Activated T-helper 1 cell treated with anti-CD3 and anti-CD28 coated beads, Interleukin-12 subunit alpha, Interleukin-12 subunit beta, Interleukin-2, Interleukin-4 antibody, amounts not matched to agents 30 ng/mL and 10 ng/mL and 1 ng/mL, durations not matched to agents 14 hours and 24 hours and 36 hours (primary cell): ENCODE measurements at regions of chr9 and their contacts with region 1.

Region 1: DNA sequence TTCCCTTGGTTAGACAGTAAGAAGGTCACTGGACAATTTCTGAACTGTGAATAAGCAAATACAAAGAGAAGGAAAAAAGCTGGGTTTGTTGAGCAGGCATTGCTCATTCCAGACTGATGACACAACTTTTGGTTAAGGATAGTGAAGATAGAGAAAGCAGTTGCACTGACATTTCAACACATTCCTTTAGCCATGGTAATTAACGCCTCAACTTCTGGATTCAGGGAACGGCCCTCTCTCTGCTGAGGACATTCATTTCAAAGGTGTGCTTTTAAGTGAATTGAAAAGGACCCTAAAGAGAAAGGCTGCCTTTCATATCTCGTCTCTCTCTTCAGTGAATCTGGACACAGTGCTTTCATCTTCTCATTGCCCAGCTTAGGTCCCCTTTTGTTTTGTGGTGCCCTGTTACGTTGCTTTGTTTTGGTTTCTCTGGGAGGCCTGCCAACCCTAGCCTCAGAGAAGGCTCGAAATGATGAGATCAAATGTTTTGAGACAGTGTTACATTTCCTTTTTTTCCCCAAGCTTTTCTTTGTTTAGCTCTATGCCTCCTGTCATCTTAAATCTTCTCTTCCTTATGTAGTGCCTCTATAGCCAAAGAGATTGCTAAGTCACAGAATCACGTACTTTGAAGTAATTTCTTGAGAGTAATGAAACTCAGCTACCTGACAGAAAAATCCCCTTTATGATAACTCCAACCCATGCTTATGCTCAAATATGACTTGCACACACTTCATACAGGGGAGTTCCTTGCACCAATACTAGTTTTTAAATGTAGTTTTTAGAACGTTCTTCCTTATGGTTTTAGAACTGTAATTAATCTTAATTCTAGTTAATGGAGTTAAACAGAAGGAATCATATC is 94.4 kb upstream of the IFNE start:
- DNase-seq: no peak
- H3K4me3 Mint-ChIP-seq: peak overlapping the region; percentile 4
- H3K27ac Mint-ChIP-seq: no peak overlapping the region
- H3K4me1 Mint-ChIP-seq: peaks cover 36% of the 10 kb centered on the region
- H3K27me3 Mint-ChIP-seq: peaks cover 33% of the 10 kb centered on the region

Region 2: DNA sequence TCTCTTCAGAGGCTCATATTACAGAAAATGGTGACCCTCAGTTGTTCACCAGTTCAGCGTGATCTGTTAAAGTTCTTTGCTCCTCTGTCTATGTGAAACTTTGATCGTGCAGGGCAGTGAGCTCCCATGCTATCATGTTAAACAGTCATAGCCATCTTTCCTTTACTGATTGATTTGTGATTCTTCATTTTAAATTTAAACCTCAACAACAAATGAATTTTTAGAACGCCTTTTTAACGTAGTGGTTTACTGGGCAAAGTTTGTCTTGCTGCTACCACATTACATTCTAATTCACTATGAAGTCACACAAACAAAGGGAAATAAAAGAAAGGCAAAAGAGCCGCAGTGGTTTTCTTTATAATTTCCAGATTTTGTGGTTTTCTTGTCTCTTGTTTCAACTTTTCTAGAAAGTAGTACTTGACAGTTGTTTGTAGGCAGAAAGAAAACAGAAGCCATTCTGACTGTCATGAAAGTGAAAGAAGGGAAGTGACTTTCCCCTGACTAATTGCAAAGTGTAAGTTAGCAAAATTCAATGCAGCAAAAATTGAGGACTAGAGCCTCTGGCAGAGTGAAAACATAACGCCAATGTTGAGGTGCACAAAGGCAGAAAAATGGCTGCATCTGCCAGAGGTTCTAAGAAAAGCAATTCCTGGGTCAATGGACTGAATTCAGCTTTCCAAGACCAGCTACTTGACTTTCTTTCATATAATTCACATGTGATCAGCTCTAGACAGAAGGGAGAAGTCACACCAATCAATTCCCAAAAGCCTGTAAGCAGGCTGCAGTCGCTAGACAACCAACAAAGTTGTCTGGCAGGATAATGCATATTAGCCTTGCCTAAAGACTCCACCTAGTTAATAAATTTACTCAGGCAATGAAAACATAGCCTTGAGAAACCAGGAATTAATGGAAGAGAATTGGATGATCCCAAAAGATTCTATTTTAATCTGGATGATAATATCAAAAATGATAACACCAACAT is 218.8 kb before region 1 on chr9:
- intact Hi-C with region 1: loop called (anchors 2 kb)
- DNase-seq: no peak
- H3K4me3 Mint-ChIP-seq: peak overlapping the region; percentile 56
- H3K27ac Mint-ChIP-seq: peak overlapping the region; percentile 68
- H3K4me1 Mint-ChIP-seq: peaks cover 14% of the 10 kb centered on the region
- H3K27me3 Mint-ChIP-seq: peaks cover 57% of the 10 kb centered on the region

Region 3: DNA sequence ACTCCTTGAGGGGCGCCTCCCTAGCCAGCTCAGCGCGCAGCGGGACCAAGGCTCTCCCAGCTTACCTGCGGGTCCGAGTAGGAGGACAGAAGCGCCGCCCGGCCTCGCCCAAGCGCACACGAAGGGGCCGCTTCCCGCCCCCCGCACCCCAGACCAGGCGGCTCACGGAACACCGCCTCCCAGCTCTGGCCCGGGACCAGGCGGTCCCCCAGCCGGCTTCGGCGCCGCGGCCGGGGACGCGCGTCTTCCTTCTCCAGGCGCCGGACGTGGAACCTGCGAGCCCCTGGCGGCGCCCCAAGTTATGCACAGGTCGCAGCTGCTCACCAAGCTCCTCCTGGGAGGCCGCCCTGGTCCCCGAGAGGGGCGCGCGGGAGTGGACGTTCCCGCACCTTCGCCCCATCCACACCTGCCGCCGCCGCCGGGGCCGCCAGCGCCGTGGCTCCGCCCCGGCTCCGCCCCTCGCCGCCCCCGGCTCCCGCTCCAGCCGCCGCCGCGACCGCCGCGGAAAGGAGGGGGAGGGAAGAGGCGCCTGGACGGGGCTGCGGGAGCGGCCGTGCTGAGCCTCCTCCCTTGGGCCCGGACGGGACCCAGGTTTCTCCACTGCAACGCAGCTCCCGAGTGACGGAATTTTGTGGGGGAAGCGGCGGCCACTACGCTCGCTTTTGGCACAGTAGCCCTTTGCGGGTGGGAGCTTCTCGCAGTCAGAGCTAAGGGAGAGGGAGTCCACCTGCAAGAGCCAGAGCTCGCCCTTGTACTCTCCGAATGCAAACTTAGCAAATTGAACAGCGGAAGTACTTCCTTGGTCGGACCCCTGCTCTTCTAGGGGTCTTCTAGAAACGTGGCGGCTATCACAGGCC is 16.9 kb before region 1 on chr9:
- intact Hi-C with region 1: loop called (anchors 1 kb)
- DNase-seq: peak; percentile 16
- H3K4me3 Mint-ChIP-seq: peak overlapping the region; percentile 85
- H3K27ac Mint-ChIP-seq: no peak overlapping the region
- H3K4me1 Mint-ChIP-seq: peaks cover 17% of the 10 kb centered on the region
- H3K27me3 Mint-ChIP-seq: peaks cover 56% of the 10 kb centered on the region

Region 4: GRCh38 chr9:21591221-21592062 is 14.9 kb after region 1 on chr9:
- intact Hi-C with region 1: loop called (anchors 1 kb)
- DNase-seq: peak; percentile 24
- H3K4me3 Mint-ChIP-seq: no peak overlapping the region
- H3K27ac Mint-ChIP-seq: peak overlapping the region; percentile 40
- H3K4me1 Mint-ChIP-seq: peaks cover 14% of the 10 kb centered on the region
- H3K27me3 Mint-ChIP-seq: peaks cover 7% of the 10 kb centered on the region

Region 5: DNA sequence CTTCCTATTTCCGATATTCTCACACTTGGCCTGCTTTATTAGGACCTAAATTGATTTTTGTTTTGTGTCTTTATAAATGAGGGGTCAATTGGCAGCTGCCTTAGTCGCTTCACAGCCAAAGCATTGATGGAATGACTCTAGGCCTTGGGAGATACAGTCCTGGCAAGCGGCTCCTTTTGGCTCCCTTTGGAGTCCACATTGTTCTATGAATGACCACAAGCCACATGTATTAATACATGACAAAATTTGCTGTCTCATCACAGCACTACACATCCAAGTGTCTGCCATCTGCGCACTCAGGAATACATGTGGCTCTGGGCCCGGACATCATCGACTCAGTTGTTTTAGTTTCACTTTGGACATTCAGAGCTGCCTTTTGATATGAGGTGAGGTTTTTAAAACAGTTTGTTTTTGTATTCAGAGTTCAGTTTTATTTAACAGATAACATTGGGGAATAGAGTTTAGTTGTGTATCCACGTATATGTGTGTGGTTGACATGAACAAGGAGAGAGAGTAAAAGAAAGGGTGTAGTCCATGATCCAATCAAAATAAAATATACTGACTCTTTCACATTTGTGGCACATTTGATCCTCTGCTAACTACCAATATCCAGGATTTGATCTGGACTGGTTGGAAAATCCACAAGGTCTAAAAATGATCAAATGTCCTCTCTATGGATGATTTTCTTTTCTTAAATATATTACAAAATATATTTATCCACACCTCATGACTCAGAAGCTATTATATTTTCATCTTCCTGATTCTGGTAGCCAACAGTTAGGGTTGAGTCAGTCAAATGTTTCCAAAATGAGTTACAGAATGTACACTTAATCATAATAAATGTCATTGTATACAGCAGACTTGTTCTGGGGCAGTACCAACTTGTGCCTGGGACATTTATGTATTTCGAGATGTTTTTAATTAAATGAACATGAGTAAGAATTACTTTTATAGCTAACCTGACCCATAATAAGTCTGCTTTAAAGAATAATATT is 111.8 kb after region 1 on chr9:
- intact Hi-C with region 1: loop called (anchors 5 kb)
- DNase-seq: no peak
- H3K4me3 Mint-ChIP-seq: no peak overlapping the region
- H3K27ac Mint-ChIP-seq: no peak overlapping the region
- H3K4me1 Mint-ChIP-seq: peaks cover 41% of the 10 kb centered on the region
- H3K27me3 Mint-ChIP-seq: peaks cover 2% of the 10 kb centered on the region